Mammary epithelial cell (primary cell): ENCODE measurements at regions of chr2 and their contacts with region 1.

Region 1: DNA sequence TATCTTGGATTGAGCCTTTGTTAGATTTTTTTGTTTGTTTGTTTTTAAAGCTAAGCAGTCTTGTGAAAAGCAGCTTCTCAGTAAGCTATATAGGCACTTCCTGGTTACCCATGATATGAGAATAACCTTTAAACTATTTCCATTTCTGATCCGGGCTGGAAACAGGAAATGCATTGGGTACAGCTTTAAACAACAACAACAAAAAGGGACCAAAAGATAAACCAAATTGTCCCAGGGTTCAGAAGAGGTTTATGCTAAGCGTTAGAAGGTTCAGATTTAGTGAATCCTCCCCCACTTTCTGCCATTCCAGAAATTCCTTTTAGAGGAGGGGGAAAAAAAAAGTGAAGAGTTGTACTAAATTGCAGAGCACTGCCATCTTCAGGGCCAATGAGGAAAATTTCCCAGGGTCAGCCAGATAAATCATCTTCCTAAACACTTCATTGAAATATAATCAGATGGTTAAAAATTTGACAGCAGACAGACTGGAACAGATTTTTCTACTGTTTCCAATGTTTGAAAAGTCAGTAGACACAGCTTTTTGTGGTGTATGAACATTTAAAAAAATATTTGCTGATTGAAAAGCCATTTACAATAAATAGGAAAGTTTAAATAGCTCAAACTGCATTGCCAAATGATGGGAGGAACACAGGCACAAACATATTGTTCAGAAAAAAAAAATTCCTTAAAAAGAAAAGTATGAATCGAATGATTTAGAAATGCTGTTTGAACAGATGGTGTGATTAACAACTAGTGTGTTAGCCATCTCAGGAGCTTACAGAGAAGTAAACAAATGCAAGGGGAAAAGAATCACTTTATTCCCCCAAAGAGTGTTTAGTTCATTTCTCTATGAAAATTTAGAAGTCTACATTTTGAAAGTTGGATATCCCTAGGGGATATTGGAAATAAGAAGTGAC is 189.9 kb upstream of the TANK start:
- DNase-seq: peak; percentile 39
- H3K4me3 ChIP-seq: no peak overlapping the region
- H3K27ac ChIP-seq: peak overlapping the region; percentile 26
- H3K4me1 ChIP-seq: peaks cover 11% of the 10 kb centered on the region
- H3K27me3 ChIP-seq: no peaks in the 10 kb centered on the region
- CTCF ChIP-seq: peak; percentile 73 to 78

Region 2: GRCh38 chr2:160207804-160208661 is 762.3 kb before region 1 on chr2:
- CTCF ChIA-PET with region 1: no interaction called
- dilution Hi-C with region 1: no loop called
- in situ Hi-C with region 1: no loop called
- intact Hi-C with region 1: loop called (anchors 1 kb)
- DNase-seq: peak; percentile 98
- H3K4me3 ChIP-seq: no peak overlapping the region
- H3K27ac ChIP-seq: peak overlapping the region; percentile 97
- H3K4me1 ChIP-seq: peaks cover 74% of the 10 kb centered on the region
- H3K27me3 ChIP-seq: no peaks in the 10 kb centered on the region
- CTCF ChIP-seq: no peak

Region 3: GRCh38 chr2:160324161-160324800 is 646.0 kb before region 1 on chr2:
- CTCF ChIA-PET with region 1: interaction called, 6 read pairs
- dilution Hi-C with region 1: no loop called
- in situ Hi-C with region 1: loop called in 1 of 2 experiments (anchors 10 kb)
- intact Hi-C with region 1: loop called (anchors 1 kb)
- DNase-seq: peak; percentile 32
- H3K4me3 ChIP-seq: no peak overlapping the region
- H3K27ac ChIP-seq: no peak overlapping the region
- H3K4me1 ChIP-seq: no peaks in the 10 kb centered on the region
- H3K27me3 ChIP-seq: no peaks in the 10 kb centered on the region
- CTCF ChIP-seq: peak; percentile 80 to 84

Region 4: DNA sequence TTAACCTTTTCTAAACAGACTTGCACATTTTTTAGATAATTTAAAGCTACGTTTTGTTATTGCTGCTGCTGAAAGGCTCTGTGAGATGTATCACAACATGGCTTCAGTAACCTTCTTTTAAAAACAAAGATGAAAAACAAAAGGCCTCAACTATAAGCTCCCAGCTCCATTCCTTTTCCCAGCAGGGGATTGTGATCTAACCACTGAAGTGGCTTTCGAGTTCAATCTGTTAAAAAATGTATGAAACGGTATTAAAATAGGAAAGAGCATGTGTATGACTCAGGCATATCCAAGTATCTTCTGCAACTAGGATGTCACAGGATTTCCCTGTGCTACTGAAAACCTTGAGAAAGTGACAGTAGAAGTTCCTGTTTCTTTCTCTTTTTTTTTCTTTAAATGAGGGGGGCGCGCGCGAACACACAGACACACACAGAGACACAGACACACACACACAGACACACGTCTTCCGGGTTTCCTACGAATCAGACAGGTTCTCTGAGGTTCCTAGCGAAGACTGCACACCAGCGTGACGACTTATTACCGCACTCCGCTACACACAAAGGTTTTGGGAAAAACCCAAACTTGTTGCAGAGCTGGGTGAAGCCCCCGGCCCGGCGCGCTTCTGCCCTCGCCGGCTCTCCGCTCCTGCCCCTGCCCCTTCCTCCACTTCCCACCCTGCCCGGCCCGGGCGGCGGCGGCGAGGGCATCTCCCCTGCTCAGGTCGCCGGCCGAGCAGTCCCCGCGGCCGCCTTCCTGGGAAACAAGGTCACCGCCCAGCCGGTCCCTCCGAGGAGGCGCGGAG is 563.5 kb before region 1 on chr2:
- CTCF ChIA-PET with region 1: interaction called, 3 read pairs
- dilution Hi-C with region 1: no loop called
- in situ Hi-C with region 1: no loop called
- intact Hi-C with region 1: loop called (anchors 1 kb)
- DNase-seq: peak; percentile 80
- H3K4me3 ChIP-seq: peak overlapping the region; percentile 76 to 85 (median 84)
- H3K27ac ChIP-seq: peak overlapping the region; percentile 87
- H3K4me1 ChIP-seq: peaks cover 64% of the 10 kb centered on the region
- H3K27me3 ChIP-seq: no peaks in the 10 kb centered on the region
- CTCF ChIP-seq: no peak

Region 5: DNA sequence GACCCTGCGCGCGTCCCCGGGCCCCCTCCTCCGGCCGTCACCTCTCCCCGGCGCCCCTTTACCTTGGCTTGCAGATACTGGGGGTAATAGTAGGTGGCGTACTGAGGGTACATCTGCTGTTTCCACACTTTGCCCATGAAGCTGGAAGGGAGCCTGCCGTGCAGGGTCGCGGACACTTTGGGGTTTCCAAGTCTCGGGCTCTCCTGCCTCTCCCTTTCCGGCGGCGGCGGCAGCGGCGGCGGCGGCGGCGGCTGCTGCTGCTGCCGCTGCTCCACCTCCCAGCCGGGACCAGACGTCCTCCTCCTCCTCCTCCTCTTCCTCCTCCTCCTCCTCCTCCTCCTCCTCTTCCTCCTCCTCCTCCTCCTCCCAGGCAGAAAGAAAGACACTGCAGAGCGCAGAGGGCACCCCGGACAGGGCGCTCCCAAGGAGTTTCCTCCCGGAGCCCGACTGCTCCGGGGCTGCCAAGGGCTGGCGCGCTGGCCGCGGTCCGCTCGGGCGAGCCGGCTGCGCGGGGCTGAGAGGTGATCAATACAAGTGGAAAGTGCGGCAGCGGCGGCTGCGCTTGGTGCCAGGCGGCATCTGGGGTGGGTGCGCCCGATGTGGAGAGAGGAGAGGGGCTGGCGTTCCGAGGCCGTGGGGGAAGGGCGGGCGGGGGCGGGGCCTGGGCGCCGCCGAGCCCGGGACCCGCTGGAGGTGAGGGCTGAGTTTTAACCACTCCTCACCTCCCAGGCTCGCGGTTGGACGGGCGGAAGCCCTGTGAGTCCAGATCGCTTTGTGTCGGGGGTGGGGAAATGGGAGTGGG is 476.9 kb before region 1 on chr2 and contains the start of gene RBMS1:
- CTCF ChIA-PET with region 1: interaction called, 5 read pairs
- dilution Hi-C with region 1: no loop called
- in situ Hi-C with region 1: no loop called
- intact Hi-C with region 1: loop called (anchors 2 kb)
- DNase-seq: peak; percentile 59
- H3K4me3 ChIP-seq: peak within 1 kb of the TSS; percentile 72 to 95 (median 72)
- H3K27ac ChIP-seq: peak within 1 kb of the TSS; percentile 84
- H3K4me1 ChIP-seq: peaks cover 11% of the 10 kb centered on the region
- H3K27me3 ChIP-seq: no peaks in the 10 kb centered on the region
- CTCF ChIP-seq: no peak
- total RNA-seq, gene RBMS1: 54.8 to 61.3 TPM

Region 6: GRCh38 chr2:160918906-160919503 is 51.3 kb before region 1 on chr2:
- CTCF ChIA-PET with region 1: no interaction called
- dilution Hi-C with region 1: no loop called
- in situ Hi-C with region 1: no loop called
- intact Hi-C with region 1: loop called (anchors 2 kb)
- DNase-seq: peak; percentile 54
- H3K4me3 ChIP-seq: no peak overlapping the region
- H3K27ac ChIP-seq: no peak overlapping the region
- H3K4me1 ChIP-seq: peaks cover 2% of the 10 kb centered on the region
- H3K27me3 ChIP-seq: no peaks in the 10 kb centered on the region
- CTCF ChIP-seq: peak; percentile 54 to 79